ENCODE measurements at regions of chr2 and their contacts with region 1.

Region 1: DNA sequence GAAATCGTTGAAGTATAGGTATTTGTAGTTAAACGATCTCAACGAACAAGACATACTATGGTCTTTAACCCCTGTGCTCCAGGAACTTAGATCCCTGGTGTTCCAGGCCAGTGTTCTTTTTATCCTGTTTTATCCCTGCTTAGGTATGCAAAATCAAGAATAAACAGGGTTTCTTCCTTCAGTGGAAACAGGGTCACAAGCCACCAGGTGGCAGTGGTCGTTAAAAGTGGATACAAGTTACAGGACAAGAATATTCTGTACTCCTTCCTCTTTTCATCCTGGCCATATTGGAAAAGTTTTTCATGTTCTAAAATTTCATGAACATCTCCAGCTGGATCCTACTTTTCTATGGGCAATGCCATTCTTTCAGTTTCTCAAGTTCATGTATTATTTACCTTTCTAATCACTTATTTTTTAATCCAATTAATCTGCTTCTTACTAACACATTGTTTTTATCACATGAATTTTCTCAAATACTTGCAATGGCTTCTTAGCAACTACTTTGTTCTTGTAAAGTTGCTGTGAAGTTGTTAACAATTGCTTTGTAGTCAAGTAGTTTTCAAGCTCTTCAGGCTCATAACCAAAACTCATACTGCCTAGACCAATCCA is 16.4 kb upstream of the HNMT start:
- DNase-seq: no peak
- ATAC-seq: peak; percentile 74
- H3K4me3 ChIP-seq: no peak overlapping the region
- H3K27ac ChIP-seq: no peak overlapping the region
- H3K4me1 ChIP-seq: no peaks in the 10 kb centered on the region
- H3K27me3 ChIP-seq: no peaks in the 10 kb centered on the region
- CTCF ChIP-seq: peak; percentile 49 to 58 (median 50); a peak in 4 of 6 replicates
- EP300 ChIP-seq: no peak
- POLR2A ChIP-seq: no peak
- RAD21 ChIP-seq: peak; percentile 69

Region 2: DNA sequence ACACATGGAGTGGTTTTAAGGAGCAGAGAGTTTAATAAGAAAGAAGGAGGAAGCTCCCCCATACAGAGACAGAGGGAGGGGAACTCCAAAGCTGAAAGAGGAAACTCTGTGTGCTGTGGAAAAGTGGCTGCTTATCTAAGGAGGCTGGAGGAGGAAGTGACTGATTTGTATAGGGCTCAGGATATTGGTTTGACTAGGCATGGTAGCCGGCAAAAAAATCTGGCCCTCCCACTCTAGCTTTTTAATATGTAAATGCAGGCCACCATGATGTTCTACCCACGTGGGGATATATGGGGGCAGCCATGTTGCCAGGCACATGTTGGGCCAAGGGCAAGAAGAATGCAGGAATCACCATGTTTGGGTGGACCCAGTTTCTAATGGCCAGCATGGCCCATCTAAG is 80.7 kb after region 1 on chr2:
- CTCF ChIA-PET with region 1: no interaction called
- POLR2A ChIA-PET with region 1: no interaction called
- RAD21 ChIA-PET with region 1: no interaction called
- SMC1A ChIA-PET with region 1: interaction called, 3 read pairs
- in situ Hi-C with region 1: no loop called
- intact Hi-C with region 1: loop called (anchors 5 kb)
- DNase-seq: peak; percentile 12
- ATAC-seq: peak; percentile 66
- H3K4me3 ChIP-seq: no peak overlapping the region
- H3K27ac ChIP-seq: no peak overlapping the region
- H3K4me1 ChIP-seq: no peaks in the 10 kb centered on the region
- H3K27me3 ChIP-seq: no peaks in the 10 kb centered on the region
- CTCF ChIP-seq: no peak
- EP300 ChIP-seq: no peak
- POLR2A ChIP-seq: no peak
- RAD21 ChIP-seq: no peak

Region 3: GRCh38 chr2:138090330-138090729 is 142.5 kb after region 1 on chr2:
- CTCF ChIA-PET with region 1: interaction called, 49 read pairs
- POLR2A ChIA-PET with region 1: no interaction called
- RAD21 ChIA-PET with region 1: interaction called, 19 read pairs
- SMC1A ChIA-PET with region 1: interaction called, 30 read pairs
- in situ Hi-C with region 1: no loop called
- intact Hi-C with region 1: loop called (anchors 1 kb)
- DNase-seq: no peak
- ATAC-seq: peak; percentile 98
- H3K4me3 ChIP-seq: no peak overlapping the region
- H3K27ac ChIP-seq: no peak overlapping the region
- H3K4me1 ChIP-seq: no peaks in the 10 kb centered on the region
- H3K27me3 ChIP-seq: no peaks in the 10 kb centered on the region
- CTCF ChIP-seq: peak; percentile 56 to 73 (median 58); a peak in 5 of 6 replicates
- EP300 ChIP-seq: no peak
- POLR2A ChIP-seq: no peak
- RAD21 ChIP-seq: peak; percentile 75

Region 4: DNA sequence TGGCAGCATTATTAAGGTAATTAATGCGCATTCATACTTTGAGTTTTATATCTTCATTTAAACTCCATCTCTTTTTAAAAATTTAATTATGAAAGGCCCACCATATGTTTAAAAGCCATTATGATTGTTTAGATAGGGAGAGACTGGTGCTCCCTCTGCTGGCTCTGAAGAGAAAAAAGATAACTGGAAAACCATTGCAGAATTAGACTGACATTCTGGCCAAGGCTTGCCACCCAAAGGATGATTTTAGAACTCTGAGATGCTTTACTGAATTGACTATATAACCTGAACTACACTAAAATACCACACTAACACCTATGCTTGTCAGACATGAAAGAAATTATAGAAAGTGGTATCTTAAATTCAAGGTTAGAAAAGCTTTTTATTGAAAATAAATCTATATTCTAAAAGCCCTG is 426.2 kb after region 1 on chr2:
- CTCF ChIA-PET with region 1: interaction called, 28 read pairs
- POLR2A ChIA-PET with region 1: no interaction called
- RAD21 ChIA-PET with region 1: interaction called, 18 read pairs
- SMC1A ChIA-PET with region 1: interaction called, 5 read pairs
- in situ Hi-C with region 1: loop called (anchors 5 kb)
- intact Hi-C with region 1: loop called (anchors 1 kb)
- DNase-seq: peak; percentile 12
- ATAC-seq: peak; percentile 72
- H3K4me3 ChIP-seq: no peak overlapping the region
- H3K27ac ChIP-seq: no peak overlapping the region
- H3K4me1 ChIP-seq: no peaks in the 10 kb centered on the region
- H3K27me3 ChIP-seq: no peaks in the 10 kb centered on the region
- CTCF ChIP-seq: peak; percentile 49 to 66 (median 59)
- EP300 ChIP-seq: no peak
- POLR2A ChIP-seq: no peak
- RAD21 ChIP-seq: peak; percentile 86

Measured in GM12878 (cell line).